ENCODE measurements at regions of chr12 and their contacts with region 1.

Region 1: DNA sequence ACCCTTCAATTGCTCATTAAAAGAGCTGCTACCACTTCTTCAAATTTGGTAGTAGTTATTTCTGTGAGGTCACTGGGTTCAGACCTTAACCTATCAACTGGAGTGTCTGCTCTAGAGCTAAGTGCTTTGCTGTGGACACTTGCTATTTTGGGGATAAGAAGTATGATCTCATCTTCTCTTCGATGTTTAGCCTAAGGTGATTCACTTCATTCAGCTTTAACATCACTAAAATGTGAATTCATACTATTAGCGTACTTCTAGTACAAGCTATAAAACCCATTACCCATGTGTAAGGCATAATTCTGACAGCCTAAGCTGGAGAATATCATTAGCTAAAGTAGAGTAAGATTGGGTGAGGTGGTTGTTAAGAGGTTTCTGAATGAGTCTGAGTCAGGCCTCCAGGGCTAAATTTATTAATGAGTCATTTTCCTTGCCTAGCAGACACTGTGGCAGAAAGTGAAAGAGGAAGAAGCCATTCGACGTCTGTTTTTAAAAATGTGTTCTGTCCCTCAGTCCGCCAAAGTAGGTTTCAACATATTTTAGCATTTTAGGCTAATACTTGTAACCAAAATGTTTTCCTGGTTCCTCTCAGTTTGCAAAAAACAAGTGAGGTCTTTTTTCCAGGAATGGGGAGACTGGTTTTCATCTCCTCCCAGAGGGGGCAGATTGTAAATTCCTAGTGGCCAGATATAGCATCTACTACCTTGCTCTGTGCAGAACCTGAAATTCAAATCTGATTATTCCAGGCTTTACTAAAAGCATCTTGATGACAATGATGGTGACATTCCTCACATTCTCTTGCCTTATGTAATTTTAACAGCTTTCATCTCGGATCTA is 103.6 kb downstream of the SSPN start:
- DNase-seq: peak; percentile 91
- ATAC-seq: peak; percentile 98
- H3K4me3 ChIP-seq: 0 out of 2 replicates have a peak overlapping the region, but pooled peaks have one; percentile 4
- H3K27ac ChIP-seq: peak overlapping the region; percentile 61; the same call in 1 of the 2 replicates
- H3K4me1 ChIP-seq: peaks cover 20% of the 10 kb centered on the region
- H3K27me3 ChIP-seq: no peaks in the 10 kb centered on the region; a peak in 1 of 4 replicates
- CTCF ChIP-seq: no peak
- EP300 ChIP-seq: peak; percentile 95 to 98
- POLR2A ChIP-seq: no peak
- RAD21 ChIP-seq: 0 out of 2 replicates have a peak, but pooled peaks have one; percentile 24

Region 2: DNA sequence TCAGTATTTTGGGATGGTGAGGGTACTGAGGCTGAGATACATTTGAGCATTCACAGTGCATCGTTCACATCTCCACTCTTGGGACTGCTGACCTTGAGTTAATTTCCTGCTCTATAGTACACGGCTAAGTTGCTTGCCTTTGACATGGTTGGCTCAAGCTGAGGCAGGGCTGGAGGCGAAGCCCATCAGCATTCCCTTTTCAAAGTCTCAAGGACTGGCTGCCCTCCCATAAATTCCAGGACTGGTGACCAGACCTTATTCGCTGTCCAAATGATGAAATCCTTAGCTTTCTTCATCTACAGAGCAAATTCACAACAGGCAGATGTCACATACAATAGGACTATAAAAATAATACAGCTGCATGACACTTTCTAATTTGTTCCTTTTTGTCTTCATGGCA is 17.7 kb before region 1 on chr12:
- CTCF ChIA-PET with region 1: interaction called, 46 read pairs
- POLR2A ChIA-PET with region 1: interaction called, 41 read pairs
- RAD21 ChIA-PET with region 1: interaction called, 6 read pairs
- SMC1A ChIA-PET with region 1: interaction called, 203 read pairs
- in situ Hi-C with region 1: no loop called
- intact Hi-C with region 1: no loop called
- DNase-seq: no peak
- ATAC-seq: no peak
- H3K4me3 ChIP-seq: no peak overlapping the region
- H3K27ac ChIP-seq: no peak overlapping the region
- H3K4me1 ChIP-seq: no peaks in the 10 kb centered on the region
- H3K27me3 ChIP-seq: no peaks in the 10 kb centered on the region
- CTCF ChIP-seq: no peak
- EP300 ChIP-seq: no peak
- POLR2A ChIP-seq: no peak
- RAD21 ChIP-seq: no peak

Region 3: DNA sequence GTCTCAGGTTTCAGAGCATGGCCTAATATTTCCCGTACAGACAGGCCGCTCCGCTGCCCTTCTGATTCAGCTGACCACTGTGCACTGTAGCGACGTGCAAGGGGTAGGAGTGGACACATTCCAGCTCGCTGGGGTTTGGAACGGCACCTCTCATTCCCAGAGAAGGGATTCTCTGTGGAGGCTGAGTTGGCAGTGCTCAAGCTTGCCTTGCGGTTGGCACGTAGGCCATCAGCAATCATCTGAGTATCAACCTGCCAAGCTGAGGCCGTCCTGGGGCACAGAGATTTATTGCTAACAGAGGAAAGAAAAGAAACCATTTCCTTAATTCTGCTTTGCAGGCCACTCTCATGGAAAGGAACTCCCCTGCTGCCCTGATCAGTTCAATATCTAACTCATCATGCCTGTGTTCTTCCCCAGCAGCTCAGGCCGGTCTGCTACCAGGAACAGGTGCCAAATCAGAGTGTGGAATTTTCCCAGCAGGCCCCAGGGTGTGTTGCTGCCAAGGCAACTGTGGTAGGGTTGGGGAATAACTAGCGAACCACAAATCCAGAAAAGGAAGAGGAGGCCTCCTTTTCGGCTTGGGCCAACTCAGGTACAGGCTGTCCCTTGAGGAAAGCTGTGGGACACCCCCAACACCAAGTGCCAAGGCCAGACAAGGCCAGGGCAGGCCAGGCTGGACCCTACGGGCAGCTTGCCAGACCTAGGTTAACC is 11.2 kb before region 1 on chr12:
- CTCF ChIA-PET with region 1: interaction called, 9 read pairs
- POLR2A ChIA-PET with region 1: interaction called, 5 read pairs
- RAD21 ChIA-PET with region 1: interaction called, 6 read pairs
- SMC1A ChIA-PET with region 1: interaction called, 42 read pairs
- in situ Hi-C with region 1: no loop called
- intact Hi-C with region 1: no loop called
- DNase-seq: no peak
- ATAC-seq: no peak; the same call in 2 of the 3 replicates
- H3K4me3 ChIP-seq: no peak overlapping the region
- H3K27ac ChIP-seq: no peak overlapping the region
- H3K4me1 ChIP-seq: no peaks in the 10 kb centered on the region
- H3K27me3 ChIP-seq: no peaks in the 10 kb centered on the region; a peak in 2 of 4 replicates
- CTCF ChIP-seq: no peak
- EP300 ChIP-seq: no peak
- POLR2A ChIP-seq: no peak
- RAD21 ChIP-seq: no peak

Region 4: DNA sequence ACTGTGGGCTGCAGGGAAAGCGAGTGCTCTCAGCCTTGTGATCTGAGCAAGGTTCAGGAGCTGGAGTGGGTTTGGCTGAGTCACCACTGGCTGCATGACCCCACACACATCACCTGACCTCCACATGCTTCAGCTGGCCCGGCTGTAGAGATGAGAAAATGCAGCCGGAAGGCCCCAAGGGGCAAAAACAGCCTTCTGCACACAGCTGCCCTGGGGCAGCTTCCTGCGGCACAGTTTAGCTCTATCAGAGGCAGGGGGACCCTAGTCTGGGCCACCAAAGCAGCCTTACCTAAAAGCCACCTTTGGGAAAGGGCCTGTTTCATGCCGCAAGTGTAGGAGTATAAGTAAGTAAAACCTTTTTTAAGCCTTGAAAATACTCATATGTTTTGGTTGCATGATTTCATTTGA is 19.7 kb after region 1 on chr12:
- CTCF ChIA-PET with region 1: interaction called, 13 read pairs
- POLR2A ChIA-PET with region 1: interaction called, 20 read pairs
- RAD21 ChIA-PET with region 1: interaction called, 37 read pairs
- SMC1A ChIA-PET with region 1: interaction called, 132 read pairs
- in situ Hi-C with region 1: no loop called
- intact Hi-C with region 1: no loop called
- DNase-seq: no peak
- ATAC-seq: peak; percentile 93
- H3K4me3 ChIP-seq: no peak overlapping the region
- H3K27ac ChIP-seq: no peak overlapping the region
- H3K4me1 ChIP-seq: peaks cover 14% of the 10 kb centered on the region
- H3K27me3 ChIP-seq: no peaks in the 10 kb centered on the region
- CTCF ChIP-seq: no peak
- EP300 ChIP-seq: peak in 1 of 2 experiments; percentile 35; a peak in 1 of 4 replicates
- POLR2A ChIP-seq: no peak
- RAD21 ChIP-seq: no peak

Measured in GM12878 (cell line).